Psoas muscle (tissue), 8 donors: ENCODE measurements at regions of chr18 and their contacts with region 1.

Region 1: DNA sequence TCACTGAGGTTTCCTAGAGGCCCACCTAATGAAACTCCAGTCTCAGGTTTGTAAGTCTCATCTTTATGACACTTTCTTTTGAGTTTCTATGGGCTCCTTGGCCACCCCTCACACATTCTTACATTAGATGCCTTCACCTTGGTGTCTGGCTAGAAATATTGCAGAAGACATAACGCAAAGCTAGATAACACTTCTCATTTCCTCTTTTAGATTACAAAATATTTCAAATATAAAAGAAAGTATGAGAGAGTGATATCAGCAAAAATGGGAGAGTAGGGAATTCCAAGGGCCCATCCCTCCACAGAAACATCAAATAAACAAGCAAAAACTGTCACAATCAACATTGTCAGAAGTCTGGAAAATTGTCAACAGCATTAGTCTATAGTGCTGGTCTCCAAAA is 43.3 kb upstream of the ZCCHC2 start:
- DNase-seq: no peak
- ATAC-seq: no peak
- H3K4me3 ChIP-seq: no peak overlapping the region
- H3K27ac ChIP-seq: no peak overlapping the region
- H3K4me1 ChIP-seq: no peaks in the 10 kb centered on the region
- H3K27me3 ChIP-seq: peaks cover 0 to 4% (median 0%) of the 10 kb centered on the region in 3 donors
- CTCF ChIP-seq: no peak

Region 2: GRCh38 chr18:62420151-62420512 is 59.4 kb before region 1 on chr18:
- intact Hi-C with region 1: no loop called
- DNase-seq: no peak
- ATAC-seq: no peak
- H3K4me3 ChIP-seq: peak overlapping the region; percentile 24
- H3K27ac ChIP-seq: peak overlapping the region; percentile 62
- H3K4me1 ChIP-seq: peaks cover 13% of the 10 kb centered on the region
- H3K27me3 ChIP-seq: no peaks in the 10 kb centered on the region
- CTCF ChIP-seq: no peak

Region 3: DNA sequence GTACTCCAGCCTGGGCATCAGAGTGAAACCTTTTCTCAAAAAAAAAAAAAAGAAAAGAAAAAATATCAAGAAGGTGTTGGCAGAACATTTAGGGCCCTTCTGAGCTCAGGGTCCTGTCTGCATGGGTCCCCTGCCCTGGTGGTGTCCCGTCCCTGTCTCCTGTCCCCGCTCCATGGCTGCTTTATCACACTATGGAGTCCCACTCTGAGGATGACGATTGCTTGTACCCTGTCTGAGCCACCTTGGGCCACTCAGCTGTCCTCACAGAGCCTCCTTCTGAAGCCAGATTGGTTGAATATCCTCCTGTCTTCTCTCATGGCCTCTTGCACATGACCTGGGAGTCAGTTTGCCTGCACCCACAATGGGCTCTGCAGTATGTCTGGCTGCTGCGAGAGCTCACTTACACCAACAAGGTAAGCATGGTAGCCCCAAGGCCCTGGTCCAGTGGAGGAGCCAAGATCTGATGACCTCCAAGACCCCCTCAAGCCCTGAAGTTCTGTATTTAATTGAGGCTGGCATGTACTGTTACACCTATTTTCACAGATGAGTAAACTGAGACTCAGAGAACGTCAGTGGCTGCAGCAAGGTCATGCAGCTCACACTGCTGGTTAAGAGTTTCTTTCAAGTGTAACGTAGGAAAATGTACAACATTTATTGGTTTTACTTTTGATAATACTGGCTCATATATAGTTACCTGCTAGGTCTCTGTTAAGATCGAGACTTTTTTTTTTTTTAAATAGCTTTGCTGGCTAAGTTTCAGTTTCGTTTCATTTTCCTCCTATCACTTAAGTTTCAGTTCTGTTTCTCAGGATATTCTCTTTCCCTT is 26.3 kb after region 1 on chr18:
- intact Hi-C with region 1: loop called in 1 of 2 experiments (anchors 5 kb)
- DNase-seq: no peak
- ATAC-seq: peak in 2 of 4 donors; percentile 27 to 41
- H3K4me3 ChIP-seq: peak overlapping the region; percentile 61
- H3K27ac ChIP-seq: peak overlapping the region; percentile 33
- H3K4me1 ChIP-seq: no peaks in the 10 kb centered on the region
- H3K27me3 ChIP-seq: no peaks in the 10 kb centered on the region
- CTCF ChIP-seq: no peak